ENCODE measurements at regions of chr9 and their contacts with region 1.

Region 1: DNA sequence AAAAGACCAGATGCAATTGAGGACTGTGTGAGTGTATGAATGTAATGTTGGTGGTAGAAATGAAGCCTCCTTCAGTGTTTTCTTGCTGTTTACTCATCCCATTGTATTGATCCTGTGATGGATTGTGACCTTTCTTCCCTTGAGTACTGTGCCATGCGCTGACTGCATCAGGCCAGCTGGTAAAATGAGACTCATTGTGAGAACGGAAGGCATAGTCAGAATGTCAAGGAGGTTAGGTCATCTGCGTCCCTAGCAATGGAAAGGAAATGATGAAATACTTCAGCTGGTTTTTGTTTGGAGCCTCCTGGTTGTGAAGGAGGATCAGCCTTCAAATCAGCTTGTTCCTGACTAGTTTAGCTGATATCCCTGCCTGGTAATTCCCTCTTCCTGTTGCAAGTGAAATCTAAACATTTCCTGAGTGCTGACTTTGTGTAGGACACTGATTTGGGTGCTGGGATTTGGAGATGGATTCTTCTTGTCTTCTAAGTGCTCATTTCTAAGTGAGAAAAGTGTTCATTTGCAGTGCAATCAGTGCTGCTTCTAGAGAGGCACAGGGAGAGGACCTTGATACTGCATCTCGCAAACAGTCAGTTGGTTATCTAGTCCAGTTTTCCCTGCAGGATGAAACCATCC is 35.5 kb downstream of the TNFSF8 start:
- DNase-seq: peak; percentile 66
- H3K4me3 Mint-ChIP-seq: no peak overlapping the region
- H3K27ac Mint-ChIP-seq: peak overlapping the region; percentile 74
- H3K4me1 Mint-ChIP-seq: peaks cover 43% of the 10 kb centered on the region
- H3K27me3 Mint-ChIP-seq: no peaks in the 10 kb centered on the region

Region 2: DNA sequence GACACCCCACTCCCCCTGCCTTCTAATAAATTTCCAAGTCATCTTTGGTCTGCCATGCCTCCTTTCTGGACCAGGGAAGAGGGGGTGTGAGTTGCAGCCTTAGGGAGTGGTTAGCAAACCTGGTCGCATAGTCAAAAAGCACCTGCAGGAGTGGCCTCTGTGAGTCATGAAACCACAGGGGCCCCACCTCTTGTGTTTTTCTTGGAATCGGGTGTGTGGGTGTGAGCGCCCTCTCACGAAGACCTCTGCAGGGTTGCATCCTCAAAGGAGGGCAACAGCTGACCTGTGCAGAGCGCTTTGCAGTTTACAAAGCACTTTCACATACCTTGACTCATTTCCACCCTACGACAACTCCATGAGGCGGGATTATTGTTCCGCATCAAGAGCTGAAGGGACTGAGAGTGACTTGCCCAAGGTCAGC is 176.1 kb before region 1 on chr9:
- CTCF ChIA-PET with region 1: interaction called, 7 read pairs
- POLR2A ChIA-PET with region 1: interaction called, 13 read pairs
- DNase-seq: peak; percentile 98
- H3K4me3 Mint-ChIP-seq: peak overlapping the region; percentile 3
- H3K27ac Mint-ChIP-seq: peak overlapping the region; percentile 93
- H3K4me1 Mint-ChIP-seq: peaks cover 68% of the 10 kb centered on the region
- H3K27me3 Mint-ChIP-seq: peaks cover 20% of the 10 kb centered on the region

Region 3: GRCh38 chr9:114869845-114870244 is 25.1 kb before region 1 on chr9:
- CTCF ChIA-PET with region 1: no interaction called
- POLR2A ChIA-PET with region 1: interaction called, 17 read pairs
- DNase-seq: peak; percentile 64
- H3K4me3 Mint-ChIP-seq: no peak overlapping the region
- H3K27ac Mint-ChIP-seq: peak overlapping the region; percentile 75
- H3K4me1 Mint-ChIP-seq: peaks cover 33% of the 10 kb centered on the region
- H3K27me3 Mint-ChIP-seq: peaks cover 8% of the 10 kb centered on the region

Measured in activated CD4-positive, alpha-beta memory T cell treated with anti-CD3 and anti-CD28 coated beads, Interleukin-2, amount 10 ng/mL, durations not matched to agents 7 days and 5 days (primary cell).